Endothelial cell of umbilical vein (primary cell): ENCODE measurements at regions of chr6 and their contacts with region 1.

Region 1: DNA sequence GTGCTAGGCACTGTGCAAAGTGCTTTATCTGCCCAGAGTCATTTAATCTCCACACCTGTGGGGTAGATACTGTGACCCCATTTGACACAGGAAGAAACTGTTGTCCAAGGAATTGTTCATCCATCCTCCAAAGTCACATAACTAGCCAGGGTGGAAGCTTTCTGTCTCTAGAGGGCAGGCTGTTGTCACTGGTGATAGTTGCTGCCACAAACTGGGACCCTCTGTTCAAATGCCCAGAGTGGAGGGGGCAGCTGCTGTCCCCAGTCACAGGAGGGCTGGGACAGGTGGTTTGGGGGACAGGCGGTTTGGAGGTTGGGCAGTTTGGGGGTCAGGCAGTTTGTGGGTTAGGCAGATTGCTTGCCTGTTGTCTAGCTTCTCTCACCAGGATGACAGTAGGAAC is 16.1 kb upstream of the TMEM242 start:
- DNase-seq: no peak
- H3K4me3 ChIP-seq: no peak overlapping the region
- H3K27ac ChIP-seq: no peak overlapping the region
- H3K4me1 ChIP-seq: no peaks in the 10 kb centered on the region
- H3K27me3 ChIP-seq: peaks cover 9 to 20% of the 10 kb centered on the region in 2 experiments
- CTCF ChIP-seq: no peak
- POLR2A ChIP-seq: no peak

Region 2: GRCh38 chr6:157148391-157149323 is 190.8 kb before region 1 on chr6:
- CTCF ChIA-PET with region 1: no interaction called
- POLR2A ChIA-PET with region 1: no interaction called
- dilution Hi-C with region 1: no loop called
- intact Hi-C with region 1: no loop called
- DNase-seq: peak; percentile 97
- H3K4me3 ChIP-seq: peak overlapping the region in 1 of 3 experiments; percentile 1
- H3K27ac ChIP-seq: peak overlapping the region; percentile 97
- H3K4me1 ChIP-seq: peaks cover 60% of the 10 kb centered on the region
- H3K27me3 ChIP-seq: no peaks in the 10 kb centered on the region
- CTCF ChIP-seq: no peak
- POLR2A ChIP-seq: no peak

Region 3: DNA sequence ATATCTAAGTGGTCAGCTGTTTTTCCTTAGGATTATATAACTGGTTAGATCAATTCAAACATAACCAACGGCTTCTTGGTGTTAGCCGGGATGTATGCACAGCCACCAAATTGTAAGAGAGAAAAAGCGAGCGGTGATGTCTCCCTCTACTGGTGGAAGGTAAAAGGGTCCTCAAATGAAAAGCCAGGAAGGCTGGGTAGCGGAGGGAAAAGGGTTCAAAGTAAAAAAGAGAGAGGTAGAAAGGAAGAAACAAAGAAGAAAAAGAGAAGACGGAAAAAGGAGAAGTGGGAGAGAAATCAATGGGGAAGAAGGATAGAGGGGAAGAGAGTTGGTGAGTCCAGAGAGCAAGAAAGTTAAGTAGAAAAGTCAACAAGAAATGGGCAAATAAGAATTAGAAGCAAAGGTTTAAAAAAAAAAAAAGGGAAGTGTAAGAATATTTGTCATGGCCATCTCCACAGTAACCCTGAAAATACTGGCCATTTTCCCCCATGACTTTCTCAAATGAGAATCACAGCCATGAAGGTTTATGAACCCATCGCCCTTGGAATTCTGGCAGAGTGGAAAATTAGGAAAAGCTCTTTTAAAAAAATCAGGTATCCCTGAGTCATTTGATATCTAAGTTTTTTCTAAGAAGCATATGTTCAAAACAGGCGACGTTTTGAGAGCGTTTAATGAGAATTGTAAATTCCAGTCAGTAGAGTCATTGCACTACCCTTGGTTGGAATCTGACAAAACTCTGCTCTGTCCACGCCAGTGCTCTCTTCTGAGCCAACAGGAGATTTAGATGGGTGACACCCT is 328.0 kb after region 1 on chr6:
- CTCF ChIA-PET with region 1: interaction called, 6 read pairs
- POLR2A ChIA-PET with region 1: no interaction called
- dilution Hi-C with region 1: no loop called
- intact Hi-C with region 1: loop called (anchors 5 kb)
- DNase-seq: peak; percentile 73
- H3K4me3 ChIP-seq: no peak overlapping the region
- H3K27ac ChIP-seq: no peak overlapping the region
- H3K4me1 ChIP-seq: peaks cover 7% of the 10 kb centered on the region
- H3K27me3 ChIP-seq: no peaks in the 10 kb centered on the region
- CTCF ChIP-seq: peak; percentile 75 to 88
- POLR2A ChIP-seq: no peak